Cardiac septum (tissue), 1 donor: ENCODE measurements at regions of chr11 and their contacts with region 1.

Region 1: DNA sequence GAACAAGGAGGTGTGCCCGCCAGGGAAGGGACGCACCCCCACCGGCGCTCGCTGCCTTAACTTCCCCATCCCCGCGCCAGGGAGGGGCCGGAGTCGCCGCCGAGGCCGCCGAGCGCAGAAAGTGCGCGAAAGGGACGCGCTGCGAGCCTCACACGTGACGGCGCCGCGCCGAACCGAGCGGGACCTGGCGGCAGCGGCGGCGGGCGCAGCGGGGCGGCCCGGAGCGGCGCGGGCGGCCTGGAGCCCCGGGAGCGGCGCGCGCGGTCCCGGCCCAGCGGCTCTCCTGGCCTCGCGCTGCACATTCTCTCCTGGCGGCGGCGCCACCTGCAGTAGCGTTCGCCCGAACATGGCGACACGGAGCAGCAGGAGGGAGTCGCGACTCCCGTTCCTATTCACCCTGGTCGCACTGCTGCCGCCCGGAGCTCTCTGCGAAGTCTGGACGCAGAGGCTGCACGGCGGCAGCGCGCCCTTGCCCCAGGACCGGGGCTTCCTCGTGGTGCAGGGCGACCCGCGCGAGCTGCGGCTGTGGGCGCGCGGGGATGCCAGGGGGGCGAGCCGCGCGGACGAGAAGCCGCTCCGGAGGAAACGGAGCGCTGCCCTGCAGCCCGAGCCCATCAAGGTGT is at the start of gene SORL1:
- DNase-seq: peak; percentile 88
- total RNA-seq, gene SORL1: 8.0 TPM

Region 2: GRCh38 chr11:121318848-121319834 is 133.0 kb before region 1 on chr11:
- intact Hi-C with region 1: loop called (anchors 5 kb)
- DNase-seq: no peak

Region 3: GRCh38 chr11:121540627-121541026 is 88.5 kb after region 1 on chr11:
- intact Hi-C with region 1: loop called (anchors 5 kb)
- DNase-seq: no peak